Activated CD4-positive, alpha-beta T cell treated with anti-CD3 and anti-CD28 coated beads, Interleukin-2, amount 10 ng/mL, durations not matched to agents 7 days and 5 days (primary cell): ENCODE measurements at regions of chr9 and their contacts with region 1.

Region 1: GRCh38 chr9:131334629-131335367 is 45.3 kb downstream of the PLPP7 start:
- DNase-seq: no peak
- H3K4me3 Mint-ChIP-seq: no peak overlapping the region
- H3K27ac Mint-ChIP-seq: no peak overlapping the region
- H3K4me1 Mint-ChIP-seq: peaks cover 3% of the 10 kb centered on the region
- H3K27me3 Mint-ChIP-seq: peaks cover 5% of the 10 kb centered on the region

Region 2: DNA sequence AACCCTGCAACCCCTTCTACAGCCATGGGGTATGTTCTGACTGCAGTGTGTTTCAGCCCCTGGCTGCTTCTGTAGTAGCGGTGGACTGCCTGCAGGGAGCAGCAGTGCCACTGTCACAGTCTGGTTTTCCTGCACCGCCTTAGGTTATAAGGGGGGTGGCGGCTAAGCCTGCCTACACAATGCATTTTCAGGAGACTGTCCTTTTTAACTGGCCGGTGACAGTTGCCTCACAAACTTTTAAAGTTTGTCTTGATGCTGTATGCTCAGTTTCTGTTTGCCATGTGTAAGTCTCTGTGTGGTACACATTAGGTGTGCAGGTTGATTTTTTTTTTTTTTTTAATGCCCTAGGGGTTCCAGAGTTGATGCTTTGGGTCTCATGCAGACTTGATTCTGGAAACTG is 156.4 kb before region 1 on chr9:
- CTCF ChIA-PET with region 1: interaction called, 42 read pairs
- POLR2A ChIA-PET with region 1: no interaction called
- DNase-seq: peak; percentile 85
- H3K4me3 Mint-ChIP-seq: no peak overlapping the region
- H3K27ac Mint-ChIP-seq: peak overlapping the region; percentile 52
- H3K4me1 Mint-ChIP-seq: peaks cover 8% of the 10 kb centered on the region
- H3K27me3 Mint-ChIP-seq: no peaks in the 10 kb centered on the region

Region 3: DNA sequence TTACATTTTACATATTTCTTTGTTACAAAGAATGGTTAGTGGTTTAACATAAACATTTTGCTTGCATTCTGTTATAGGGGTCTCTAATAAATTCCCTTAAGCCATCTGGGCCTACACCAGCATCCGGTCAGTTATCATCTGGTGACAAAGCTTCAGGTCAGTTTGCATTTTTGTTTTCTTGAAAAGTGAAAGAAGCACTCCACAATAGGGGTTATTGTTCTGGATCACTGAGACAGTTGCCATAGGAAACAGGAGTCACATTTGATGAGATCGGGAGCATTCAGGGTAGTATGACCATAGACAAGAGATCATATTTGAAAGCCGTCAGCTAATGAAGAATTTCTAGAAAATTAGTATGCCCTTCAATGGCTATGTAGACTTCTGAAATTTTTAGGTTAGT is 145.8 kb before region 1 on chr9:
- CTCF ChIA-PET with region 1: no interaction called
- POLR2A ChIA-PET with region 1: no interaction called
- DNase-seq: no peak
- H3K4me3 Mint-ChIP-seq: no peak overlapping the region
- H3K27ac Mint-ChIP-seq: no peak overlapping the region
- H3K4me1 Mint-ChIP-seq: peaks cover 2% of the 10 kb centered on the region
- H3K27me3 Mint-ChIP-seq: no peaks in the 10 kb centered on the region

Region 4: DNA sequence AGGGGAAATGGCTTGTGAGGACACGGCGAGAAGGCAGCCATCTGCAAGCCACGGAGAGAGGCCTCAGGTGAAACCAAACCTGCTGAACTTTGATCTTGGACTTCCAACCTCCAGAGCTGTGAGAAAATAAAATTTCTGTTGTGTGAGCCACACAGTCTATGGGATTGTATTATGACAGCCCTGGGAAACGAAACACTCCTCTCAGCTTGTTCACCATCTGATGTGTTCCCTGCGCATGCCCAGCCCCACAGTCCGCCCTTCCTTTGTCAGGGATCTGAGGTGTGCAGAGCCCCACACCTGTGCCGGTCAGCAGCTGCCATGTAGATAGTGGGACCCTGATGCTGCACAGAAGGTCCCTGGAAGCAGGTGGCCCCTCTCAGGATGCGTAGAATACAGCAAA is 11.2 kb before region 1 on chr9:
- CTCF ChIA-PET with region 1: interaction called, 11 read pairs
- POLR2A ChIA-PET with region 1: no interaction called
- DNase-seq: no peak
- H3K4me3 Mint-ChIP-seq: no peak overlapping the region
- H3K27ac Mint-ChIP-seq: no peak overlapping the region
- H3K4me1 Mint-ChIP-seq: no peaks in the 10 kb centered on the region
- H3K27me3 Mint-ChIP-seq: no peaks in the 10 kb centered on the region

Region 5: GRCh38 chr9:131349881-131350563 is 15.2 kb after region 1 on chr9:
- CTCF ChIA-PET with region 1: interaction called, 19 read pairs
- POLR2A ChIA-PET with region 1: no interaction called
- DNase-seq: peak; percentile 92
- H3K4me3 Mint-ChIP-seq: no peak overlapping the region
- H3K27ac Mint-ChIP-seq: peak overlapping the region; percentile 78
- H3K4me1 Mint-ChIP-seq: peaks cover 13% of the 10 kb centered on the region
- H3K27me3 Mint-ChIP-seq: no peaks in the 10 kb centered on the region

Region 6: GRCh38 chr9:131418143-131419028 is 83.6 kb after region 1 on chr9:
- CTCF ChIA-PET with region 1: no interaction called
- POLR2A ChIA-PET with region 1: no interaction called
- DNase-seq: no peak
- H3K4me3 Mint-ChIP-seq: peak overlapping the region; percentile 59
- H3K27ac Mint-ChIP-seq: peak overlapping the region; percentile 85
- H3K4me1 Mint-ChIP-seq: peaks cover 98% of the 10 kb centered on the region
- H3K27me3 Mint-ChIP-seq: no peaks in the 10 kb centered on the region